CD14-positive monocyte (primary cell): ENCODE measurements at regions of chr3 and their contacts with region 1.

Region 1: DNA sequence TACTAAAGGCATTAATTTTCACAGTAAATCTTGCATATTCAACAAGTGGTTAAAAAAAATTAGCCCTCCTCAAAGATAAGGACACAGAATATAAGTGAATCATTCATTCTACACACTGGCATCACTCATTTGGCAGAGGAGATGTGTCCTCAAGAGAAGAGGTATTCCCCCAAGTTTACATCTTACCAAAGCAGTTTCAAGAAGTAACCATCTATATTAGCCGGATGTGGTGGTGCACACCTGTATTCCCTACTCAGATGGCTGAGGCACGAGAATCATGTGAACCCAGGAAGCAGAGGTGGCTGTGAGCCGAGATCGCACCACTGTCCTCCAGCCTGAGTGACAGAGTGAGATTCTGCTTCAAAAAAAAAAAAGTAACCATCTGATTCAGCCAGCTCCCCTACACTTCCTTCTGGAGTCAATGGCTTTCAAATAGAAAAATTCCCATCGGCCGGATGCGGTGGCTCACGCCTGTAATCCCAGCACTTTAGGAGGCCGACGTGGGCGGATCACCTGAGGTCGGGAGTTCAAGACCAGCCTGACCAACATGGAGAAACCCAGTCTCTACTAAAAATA is 15.4 kb downstream of the RAF1 start:
- DNase-seq: peak in 2 of 3 donors; percentile 21 to 75
- H3K4me3 ChIP-seq: peak overlapping the region in 1 of 3 experiments; percentile 45
- H3K4me3 Mint-ChIP-seq: peak overlapping the region in 1 of 2 donors; percentile 31
- H3K27ac ChIP-seq: peak overlapping the region; percentile 78 to 91
- H3K27ac Mint-ChIP-seq: peak overlapping the region; percentile 95 to 98 (median 97)
- H3K4me1 ChIP-seq: peaks cover 27 to 32% of the 10 kb centered on the region in 2 donors
- H3K4me1 Mint-ChIP-seq: peaks cover 55% of the 10 kb centered on the region
- H3K27me3 ChIP-seq: no peaks in the 10 kb centered on the region
- H3K27me3 Mint-ChIP-seq: no peaks in the 10 kb centered on the region
- CTCF ChIP-seq: no peak

Region 2: GRCh38 chr3:12706504-12707253 is 58.2 kb after region 1 on chr3:
- intact Hi-C with region 1: loop called in 1 of 2 experiments (anchors 5 kb)
- DNase-seq: peak; percentile 70 to 78 (median 78)
- H3K4me3 ChIP-seq: no peak overlapping the region
- H3K4me3 Mint-ChIP-seq: peak overlapping the region in 1 of 2 donors; percentile 19
- H3K27ac ChIP-seq: no peak overlapping the region
- H3K27ac Mint-ChIP-seq: peak overlapping the region in 1 of 7 donors; percentile 73
- H3K4me1 ChIP-seq: peaks cover 10 to 12% of the 10 kb centered on the region in 2 donors
- H3K4me1 Mint-ChIP-seq: peaks cover 29% of the 10 kb centered on the region
- H3K27me3 ChIP-seq: no peaks in the 10 kb centered on the region
- H3K27me3 Mint-ChIP-seq: peaks cover 6 to 15% (median 10%) of the 10 kb centered on the region in 3 donors
- CTCF ChIP-seq: peak; percentile 86

Region 3: DNA sequence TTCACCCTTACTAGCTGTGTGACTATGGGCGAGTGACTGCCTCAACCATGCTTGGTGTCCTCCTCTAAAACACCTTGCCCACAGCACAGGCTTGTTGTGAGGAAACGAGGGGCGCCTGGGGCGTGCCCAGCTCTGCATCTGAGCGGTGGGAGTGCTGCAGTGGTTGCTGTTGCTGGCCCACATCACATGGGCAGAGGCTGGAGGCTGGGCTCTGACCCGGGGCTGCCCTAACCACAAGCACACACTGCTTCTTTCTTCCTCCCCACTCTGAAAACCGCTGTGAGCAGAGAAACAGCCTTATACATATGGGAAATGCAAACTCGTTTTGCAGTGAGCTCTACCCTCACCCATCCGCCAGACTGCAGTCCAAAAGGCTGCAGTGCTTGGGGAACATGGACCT is 267.7 kb after region 1 on chr3:
- intact Hi-C with region 1: no loop called
- DNase-seq: no peak
- H3K4me3 ChIP-seq: no peak overlapping the region
- H3K4me3 Mint-ChIP-seq: no peak overlapping the region
- H3K27ac ChIP-seq: peak overlapping the region in 1 of 2 donors; percentile 0
- H3K27ac Mint-ChIP-seq: peak overlapping the region in 1 of 7 donors; percentile 50
- H3K4me1 ChIP-seq: no peaks in the 10 kb centered on the region
- H3K4me1 Mint-ChIP-seq: peaks cover 1% of the 10 kb centered on the region
- H3K27me3 ChIP-seq: no peaks in the 10 kb centered on the region
- H3K27me3 Mint-ChIP-seq: no peaks in the 10 kb centered on the region
- CTCF ChIP-seq: no peak

Region 4: GRCh38 chr3:13200946-13201345 is 552.5 kb after region 1 on chr3:
- intact Hi-C with region 1: no loop called
- DNase-seq: no peak
- H3K4me3 ChIP-seq: no peak overlapping the region
- H3K4me3 Mint-ChIP-seq: peak overlapping the region in 1 of 2 donors; percentile 3
- H3K27ac ChIP-seq: no peak overlapping the region
- H3K27ac Mint-ChIP-seq: no peak overlapping the region
- H3K4me1 ChIP-seq: no peaks in the 10 kb centered on the region
- H3K4me1 Mint-ChIP-seq: peaks cover 7% of the 10 kb centered on the region
- H3K27me3 ChIP-seq: peaks cover 10 to 31% of the 10 kb centered on the region in 2 donors
- H3K27me3 Mint-ChIP-seq: peaks cover 32 to 55% (median 45%) of the 10 kb centered on the region in 3 donors
- CTCF ChIP-seq: no peak